GM18951 (cell line): ENCODE measurements at regions of chr2 and their contacts with region 1.

Region 1: GRCh38 chr2:226977775-226978190 is 141.9 kb downstream of the RHBDD1 start:
- POLR2A ChIP-seq: no peak

Region 2: GRCh38 chr2:226690461-226691024 is 287.2 kb before region 1 on chr2:
- in situ Hi-C with region 1: no loop called
- POLR2A ChIP-seq: no peak

Region 3: DNA sequence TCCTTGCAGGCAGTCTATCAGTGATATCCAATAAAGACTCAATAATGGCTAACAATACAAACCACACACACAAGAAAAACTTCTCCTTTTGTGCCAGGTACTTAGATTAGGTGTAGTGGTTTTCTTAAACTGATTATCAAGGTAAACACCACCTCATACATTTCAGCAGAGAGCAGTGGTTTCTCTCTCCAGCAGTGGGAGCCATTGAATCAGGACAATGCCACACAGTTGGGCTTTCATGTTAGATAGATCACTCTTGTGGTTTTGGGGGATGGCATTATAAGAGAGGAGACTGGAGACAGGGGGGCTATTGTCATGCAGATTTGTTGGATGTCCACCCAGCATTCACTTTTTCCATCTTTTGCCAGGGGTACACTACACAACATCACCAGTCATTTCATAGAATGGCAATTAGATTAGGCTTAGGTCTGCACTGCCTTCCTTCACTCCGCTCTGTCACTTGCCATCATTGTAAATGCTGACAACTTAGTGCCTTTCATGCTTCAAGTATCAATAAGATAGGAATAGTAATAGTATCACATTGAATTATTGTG is 164.6 kb before region 1 on chr2:
- in situ Hi-C with region 1: loop called (anchors 10 kb)
- POLR2A ChIP-seq: no peak